ENCODE measurements at regions of chr2 and their contacts with region 1.

Region 1: DNA sequence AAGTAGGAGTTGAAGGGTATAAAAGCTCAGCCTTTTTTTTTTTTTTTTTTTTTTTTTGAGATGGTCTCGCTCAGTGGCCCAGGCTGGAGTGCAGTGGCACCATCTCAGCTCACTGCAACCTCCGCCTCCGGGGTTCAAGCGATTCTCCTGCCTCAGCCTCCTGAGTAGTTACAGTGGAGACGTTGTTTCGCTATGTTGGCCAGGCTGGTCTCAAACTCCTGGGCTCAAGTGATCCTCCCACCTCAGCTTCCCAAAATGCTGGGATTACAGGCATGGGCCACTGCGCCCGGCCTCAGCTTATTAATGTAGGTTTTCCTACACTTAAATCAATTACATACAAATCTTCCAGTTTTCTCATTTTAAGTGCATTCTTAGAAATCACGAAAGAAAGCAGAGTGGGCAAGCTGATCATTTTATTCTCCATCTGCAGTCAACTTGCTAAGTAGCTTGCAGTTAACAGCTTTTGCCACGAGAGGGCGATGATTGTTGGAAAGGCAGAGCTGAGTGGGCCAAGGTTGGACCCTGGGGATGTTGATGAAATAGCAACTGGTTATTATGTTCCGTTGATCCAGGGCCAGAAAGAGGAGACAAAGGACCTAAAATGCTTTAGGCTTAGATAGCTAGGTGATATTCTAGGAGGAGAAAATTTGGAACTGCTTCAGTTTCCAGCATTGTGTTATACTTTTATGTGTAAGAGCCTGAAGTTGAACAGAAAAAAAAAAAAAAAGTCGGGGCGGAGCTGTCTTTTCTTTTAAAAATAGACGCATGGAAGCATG is 234.4 kb upstream of the EPAS1 start:
- DNase-seq: peak; percentile 53
- H3K4me3 ChIP-seq: no peak overlapping the region
- H3K27ac ChIP-seq: no peak overlapping the region
- H3K4me1 ChIP-seq: peaks cover 4% of the 10 kb centered on the region
- H3K27me3 ChIP-seq: no peaks in the 10 kb centered on the region
- CTCF ChIP-seq: peak; percentile 85 to 92

Region 2: DNA sequence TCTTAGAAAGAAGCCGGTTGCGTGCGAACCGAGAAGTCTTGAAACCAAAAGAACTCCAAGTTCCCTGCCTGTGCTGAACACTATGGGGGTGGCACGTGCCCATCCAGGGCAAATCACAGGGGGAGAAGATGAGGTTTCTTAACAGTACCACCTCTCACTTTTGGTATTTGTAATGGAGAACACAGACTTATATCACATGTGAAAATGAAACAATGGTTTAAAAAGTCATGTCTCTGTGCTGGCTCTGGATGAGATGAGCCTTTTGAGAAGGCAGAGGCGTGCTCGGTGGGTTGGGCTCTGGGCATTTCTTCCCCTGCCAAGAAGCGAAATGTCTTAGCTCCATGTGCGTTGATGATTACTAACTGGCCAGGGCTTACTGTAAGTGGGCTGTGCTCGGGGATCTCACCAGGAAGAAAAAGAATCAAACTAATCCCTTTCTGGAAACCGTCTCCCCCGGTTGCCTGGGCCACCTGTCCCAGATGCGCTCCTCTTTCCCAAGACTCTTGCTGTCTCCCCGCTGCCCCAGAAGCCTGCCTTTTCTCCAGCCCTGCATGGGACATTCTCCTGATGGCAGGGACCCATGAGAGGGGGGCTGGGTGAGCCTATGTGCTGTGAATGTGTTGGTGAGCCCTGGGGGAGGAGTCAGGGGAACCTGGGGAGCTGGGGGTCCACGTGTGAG is 158.4 kb before region 1 on chr2:
- CTCF ChIA-PET with region 1: no interaction called
- dilution Hi-C with region 1: no loop called
- in situ Hi-C with region 1: no loop called
- intact Hi-C with region 1: no loop called
- DNase-seq: no peak
- H3K4me3 ChIP-seq: no peak overlapping the region
- H3K27ac ChIP-seq: no peak overlapping the region
- H3K4me1 ChIP-seq: peaks cover 9% of the 10 kb centered on the region
- H3K27me3 ChIP-seq: no peaks in the 10 kb centered on the region
- CTCF ChIP-seq: no peak

Region 3: DNA sequence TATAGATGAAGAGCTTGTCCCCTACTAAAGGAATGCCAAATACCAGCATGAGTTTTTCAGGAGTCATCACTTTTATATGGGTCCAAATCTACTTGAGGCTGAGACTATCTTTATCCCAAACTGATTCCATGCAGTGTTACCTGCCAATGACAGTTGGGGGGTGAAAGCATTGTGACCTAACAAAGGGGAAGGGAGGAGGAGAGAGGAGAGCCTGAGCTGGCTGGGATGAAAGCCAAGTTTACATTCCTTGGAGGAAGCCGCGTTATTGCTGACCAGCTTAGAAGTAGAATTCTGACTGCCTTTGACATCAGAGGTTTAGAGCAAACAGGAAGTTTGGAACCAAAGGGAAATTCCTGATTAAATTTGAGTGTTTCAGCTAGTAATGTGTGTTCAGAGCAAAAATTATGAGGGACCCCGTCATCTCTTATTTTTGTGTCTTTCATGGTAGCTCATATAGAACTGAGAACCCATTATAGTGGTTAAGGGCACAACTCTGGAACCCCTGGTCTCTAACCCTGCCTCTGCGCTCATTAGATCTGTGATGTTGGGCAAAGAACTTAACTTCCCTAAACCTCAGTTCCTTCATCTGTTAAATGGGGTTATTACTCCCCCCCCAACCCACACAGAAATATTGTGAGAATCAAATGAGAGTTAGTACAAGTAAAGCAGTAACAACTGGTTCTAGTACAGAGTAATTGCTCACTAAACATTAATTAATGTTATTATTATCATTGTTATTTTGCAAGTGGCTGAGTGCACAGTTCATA is 35.1 kb after region 1 on chr2:
- CTCF ChIA-PET with region 1: no interaction called
- dilution Hi-C with region 1: no loop called
- in situ Hi-C with region 1: no loop called
- intact Hi-C with region 1: no loop called
- DNase-seq: peak; percentile 92
- H3K4me3 ChIP-seq: no peak overlapping the region
- H3K27ac ChIP-seq: peak overlapping the region; percentile 89
- H3K4me1 ChIP-seq: peaks cover 23% of the 10 kb centered on the region
- H3K27me3 ChIP-seq: no peaks in the 10 kb centered on the region
- CTCF ChIP-seq: no peak

Region 4: DNA sequence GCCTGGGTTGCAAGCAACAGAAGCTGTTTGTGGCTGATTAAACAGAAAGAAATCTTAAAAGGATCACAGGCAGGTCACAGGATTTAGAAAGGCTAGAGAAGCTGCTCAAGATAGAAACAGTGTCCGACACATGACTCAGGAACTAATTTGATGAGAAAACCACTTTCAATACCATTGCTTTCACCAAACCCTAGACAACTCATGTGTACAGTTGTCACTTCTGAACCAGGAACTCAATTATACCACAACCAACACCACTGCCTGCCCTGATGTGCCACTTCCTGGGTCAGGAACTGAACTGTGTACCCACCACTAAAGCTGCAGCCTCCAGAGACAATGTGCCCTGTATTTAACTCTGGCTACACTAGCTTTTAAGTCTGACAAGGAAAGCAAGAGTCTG is 472.5 kb after region 1 on chr2:
- CTCF ChIA-PET with region 1: no interaction called
- dilution Hi-C with region 1: no loop called
- in situ Hi-C with region 1: no loop called
- intact Hi-C with region 1: loop called (anchors 5 kb)
- DNase-seq: no peak
- H3K4me3 ChIP-seq: no peak overlapping the region
- H3K27ac ChIP-seq: no peak overlapping the region
- H3K4me1 ChIP-seq: no peaks in the 10 kb centered on the region
- H3K27me3 ChIP-seq: no peaks in the 10 kb centered on the region
- CTCF ChIP-seq: no peak

Measured in mammary epithelial cell (primary cell).